IMR-90 (cell line): ENCODE measurements at regions of chr17 and their contacts with region 1.

Region 1: GRCh38 chr17:43878260-43879175 is 28.8 kb downstream of the MPP2 start:
- DNase-seq: peak; percentile 89
- ATAC-seq: peak; percentile 100
- H3K4me3 ChIP-seq: no peak overlapping the region
- H3K27ac ChIP-seq: no peak overlapping the region
- H3K4me1 ChIP-seq: peaks cover 2% of the 10 kb centered on the region; the same call in 1 of the 2 replicates
- H3K27me3 ChIP-seq: peaks cover 10% of the 10 kb centered on the region
- CTCF ChIP-seq: peak; percentile 95
- POLR2A ChIP-seq: no peak
- RAD21 ChIP-seq: peak; percentile 87

Region 2: GRCh38 chr17:43546319-43547188 is 332.0 kb before region 1 on chr17 and contains the start of gene ETV4:
- CTCF ChIA-PET with region 1: no interaction called
- POLR2A ChIA-PET with region 1: no interaction called
- dilution Hi-C with region 1: no loop called
- in situ Hi-C with region 1: no loop called
- intact Hi-C with region 1: no loop called
- DNase-seq: peak; percentile 89
- ATAC-seq: peak; percentile 87
- H3K4me3 ChIP-seq: peak within 1 kb of the TSS; percentile 61
- H3K27ac ChIP-seq: peak within 1 kb of the TSS; percentile 42; the same call in 1 of the 2 replicates
- H3K4me1 ChIP-seq: peaks cover 14% of the 10 kb centered on the region
- H3K27me3 ChIP-seq: no peaks in the 10 kb centered on the region
- CTCF ChIP-seq: no peak
- POLR2A ChIP-seq: no peak
- RAD21 ChIP-seq: no peak
- total RNA-seq, gene ETV4: 3.3 and 4.3 TPM in 2 replicates

Region 3: GRCh38 chr17:43994272-43995149 is 116.0 kb after region 1 on chr17:
- CTCF ChIA-PET with region 1: no interaction called
- POLR2A ChIA-PET with region 1: no interaction called
- dilution Hi-C with region 1: no loop called
- in situ Hi-C with region 1: no loop called
- intact Hi-C with region 1: loop called (anchors 1 kb)
- DNase-seq: peak; percentile 37
- ATAC-seq: peak; percentile 99
- H3K4me3 ChIP-seq: no peak overlapping the region; the same call in 1 of the 2 replicates
- H3K27ac ChIP-seq: no peak overlapping the region
- H3K4me1 ChIP-seq: no peaks in the 10 kb centered on the region; the same call in 1 of the 2 replicates
- H3K27me3 ChIP-seq: peaks cover 18% of the 10 kb centered on the region
- CTCF ChIP-seq: peak; percentile 96
- POLR2A ChIP-seq: peak; percentile 38; the same call in 1 of the 2 replicates
- RAD21 ChIP-seq: peak; percentile 93

Region 4: GRCh38 chr17:44170499-44171201 is 292.1 kb after region 1 on chr17 and contains the start of gene ASB16:
- CTCF ChIA-PET with region 1: no interaction called
- POLR2A ChIA-PET with region 1: no interaction called
- dilution Hi-C with region 1: no loop called
- in situ Hi-C with region 1: no loop called
- intact Hi-C with region 1: loop called (anchors 1 kb)
- DNase-seq: peak; percentile 55
- ATAC-seq: peak; percentile 72
- H3K4me3 ChIP-seq: no peak within 1 kb of the TSS
- H3K27ac ChIP-seq: no peak within 1 kb of the TSS
- H3K4me1 ChIP-seq: peaks cover 11% of the 10 kb centered on the region
- H3K27me3 ChIP-seq: no peaks in the 10 kb centered on the region
- CTCF ChIP-seq: no peak
- POLR2A ChIP-seq: no peak
- RAD21 ChIP-seq: no peak
- total RNA-seq, gene ASB16: not detected in 2 replicates